Sigmoid colon (tissue), 7 donors: ENCODE measurements at regions of chr4 and their contacts with region 1.

Region 1: DNA sequence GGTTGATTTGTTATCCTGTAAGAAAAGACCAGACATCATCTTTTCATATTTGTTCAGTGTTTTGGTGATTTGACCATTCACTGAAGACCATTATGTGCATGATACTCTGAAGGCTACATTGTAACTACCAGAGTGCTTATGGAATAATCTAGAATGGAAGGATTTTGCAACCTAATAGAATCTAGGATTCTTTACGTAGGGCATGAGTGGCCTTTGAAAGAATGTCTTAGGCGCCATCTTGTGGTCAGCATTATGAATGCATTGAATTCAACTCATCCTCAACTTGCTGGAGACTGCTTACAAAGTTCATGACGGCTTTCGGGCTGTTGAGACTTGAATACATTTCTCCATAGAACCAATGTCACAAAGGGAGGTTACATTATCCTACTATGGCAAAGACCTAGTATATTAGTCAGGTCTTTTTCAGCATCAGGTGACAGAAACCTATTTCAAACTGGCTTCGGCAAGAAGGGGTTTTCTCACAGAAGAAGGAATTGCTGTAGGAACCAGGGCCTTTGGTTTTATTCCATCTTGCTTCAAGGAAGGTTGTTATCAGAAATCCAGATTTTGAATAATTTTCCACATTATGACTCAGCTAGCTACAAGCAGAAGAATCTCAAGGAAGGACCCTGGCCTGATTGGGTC is 104.1 kb downstream of the GPAT3 start:
- DNase-seq: no peak
- H3K4me3 ChIP-seq: no peak overlapping the region
- H3K27ac ChIP-seq: no peak overlapping the region
- H3K4me1 ChIP-seq: peaks cover 0 to 15% (median 0%) of the 10 kb centered on the region in 4 donors
- H3K27me3 ChIP-seq: no peaks in the 10 kb centered on the region
- CTCF ChIP-seq: peak; percentile 75 to 83 (median 78)
- EP300 ChIP-seq: no peak
- POLR2A ChIP-seq: no peak

Region 2: GRCh38 chr4:83490876-83491450 is 149.0 kb before region 1 on chr4:
- intact Hi-C with region 1: loop called (anchors 5 kb)
- DNase-seq: no peak
- H3K4me3 ChIP-seq: no peak overlapping the region
- H3K27ac ChIP-seq: no peak overlapping the region
- H3K4me1 ChIP-seq: peaks cover 0 to under 1% (median 0%) of the 10 kb centered on the region in 4 donors
- H3K27me3 ChIP-seq: no peaks in the 10 kb centered on the region
- CTCF ChIP-seq: peak in 3 of 4 experiments; percentile 36 to 52 (median 37)
- EP300 ChIP-seq: no peak
- POLR2A ChIP-seq: no peak

Region 3: DNA sequence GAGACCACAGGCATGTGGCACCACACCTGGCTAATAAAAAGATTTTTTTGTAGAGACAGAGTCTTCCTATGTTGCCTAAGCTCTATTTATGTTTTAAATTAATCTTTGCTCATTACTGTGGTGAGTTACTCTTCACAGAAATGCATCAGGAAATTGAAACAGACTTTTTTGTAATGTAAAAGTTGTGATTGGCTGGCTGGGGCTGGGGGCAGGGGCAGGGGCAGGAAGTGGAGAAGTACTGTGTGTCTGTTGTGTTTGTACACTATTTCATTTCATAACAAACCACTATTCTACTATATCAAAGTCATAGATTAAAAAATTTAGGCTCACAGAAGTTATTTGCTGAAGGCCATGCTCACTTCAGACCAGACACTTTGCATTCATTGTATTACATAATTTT is 136.0 kb before region 1 on chr4:
- intact Hi-C with region 1: loop called (anchors 1 kb)
- DNase-seq: no peak
- H3K4me3 ChIP-seq: no peak overlapping the region
- H3K27ac ChIP-seq: no peak overlapping the region
- H3K4me1 ChIP-seq: no peaks in the 10 kb centered on the region
- H3K27me3 ChIP-seq: no peaks in the 10 kb centered on the region
- CTCF ChIP-seq: no peak
- EP300 ChIP-seq: no peak
- POLR2A ChIP-seq: no peak

Region 4: GRCh38 chr4:84503495-84504437 is 863.8 kb after region 1 on chr4:
- intact Hi-C with region 1: loop called (anchors 10 kb)
- DNase-seq: no peak
- H3K4me3 ChIP-seq: no peak overlapping the region
- H3K27ac ChIP-seq: peak overlapping the region in 1 of 4 donors; percentile 88
- H3K4me1 ChIP-seq: peaks cover 0 to 12% (median 12%) of the 10 kb centered on the region in 4 donors
- H3K27me3 ChIP-seq: peaks cover 58 to 100% (median 78%) of the 10 kb centered on the region in 3 donors
- CTCF ChIP-seq: peak in 2 of 4 experiments; percentile 33 to 59
- EP300 ChIP-seq: no peak
- POLR2A ChIP-seq: no peak

Region 5: GRCh38 chr4:84529169-84529751 is 889.3 kb after region 1 on chr4:
- intact Hi-C with region 1: loop called (anchors 5 kb)
- DNase-seq: no peak
- H3K4me3 ChIP-seq: no peak overlapping the region
- H3K27ac ChIP-seq: no peak overlapping the region
- H3K4me1 ChIP-seq: no peaks in the 10 kb centered on the region
- H3K27me3 ChIP-seq: no peaks in the 10 kb centered on the region
- CTCF ChIP-seq: peak in 3 of 4 experiments; percentile 22 to 54 (median 30)
- EP300 ChIP-seq: no peak
- POLR2A ChIP-seq: no peak